PC-3 (cell line): ENCODE measurements at regions of chr7 and their contacts with region 1.

Region 1: GRCh38 chr7:130912862-130913631 is 179.0 kb upstream of the KLF14 start:
- DNase-seq: peak; percentile 96
- ATAC-seq: peak; percentile 52
- H3K4me3 ChIP-seq: peak overlapping the region; percentile 92
- H3K27ac ChIP-seq: peak overlapping the region; percentile 99
- H3K4me1 ChIP-seq: peaks cover 57% of the 10 kb centered on the region
- H3K27me3 ChIP-seq: no peaks in the 10 kb centered on the region
- CTCF ChIP-seq: no peak

Region 2: DNA sequence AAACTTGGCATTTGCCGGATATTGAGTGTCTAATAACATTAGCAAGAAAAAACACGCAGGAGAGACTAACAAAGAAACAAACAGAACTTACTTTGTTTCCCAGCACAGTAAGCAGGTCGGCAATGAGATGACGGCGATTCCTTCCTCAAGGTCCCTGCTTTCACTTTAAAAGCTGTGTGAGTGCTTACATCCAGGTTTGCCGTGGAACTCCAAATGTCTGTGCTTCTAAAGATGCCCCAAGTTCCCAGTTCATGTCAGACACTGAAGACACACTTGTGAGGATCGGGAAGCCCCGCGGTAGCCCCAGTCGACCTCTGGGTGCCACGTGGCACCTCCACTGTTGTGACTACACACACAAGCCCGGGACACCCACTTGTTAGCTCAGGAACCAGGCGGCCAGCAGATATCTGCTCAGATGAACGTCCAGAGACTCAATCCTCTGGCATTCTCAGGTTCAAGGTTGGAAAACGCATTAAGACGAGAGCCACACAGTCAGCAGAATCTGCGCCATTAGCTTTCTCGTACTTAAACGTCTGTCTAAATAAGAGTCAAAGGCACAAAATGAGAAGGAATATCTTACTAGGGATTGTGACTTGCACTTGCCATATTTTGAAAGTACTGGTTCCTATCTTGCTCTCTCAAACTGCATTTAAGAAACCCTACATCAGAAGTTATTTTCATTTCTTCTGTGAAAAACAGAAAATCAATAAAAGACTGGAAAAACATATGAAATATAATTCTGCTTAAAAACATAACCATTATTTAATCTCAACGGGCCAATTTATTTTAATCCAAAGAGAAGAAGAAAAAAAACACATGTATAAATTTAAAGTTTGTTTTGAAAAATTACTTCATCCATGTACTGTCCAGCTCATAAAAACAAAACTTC is 28.5 kb after region 1 on chr7:
- CTCF ChIA-PET with region 1: interaction called, 3 read pairs
- POLR2A ChIA-PET with region 1: interaction called, 10 read pairs
- intact Hi-C with region 1: loop called (anchors 1 kb)
- DNase-seq: peak; percentile 63
- ATAC-seq: peak; percentile 54
- H3K4me3 ChIP-seq: peak overlapping the region; percentile 80
- H3K27ac ChIP-seq: peak overlapping the region; percentile 87
- H3K4me1 ChIP-seq: peaks cover 63% of the 10 kb centered on the region
- H3K27me3 ChIP-seq: no peaks in the 10 kb centered on the region
- CTCF ChIP-seq: no peak

Region 3: GRCh38 chr7:130961128-130961601 is 48.1 kb after region 1 on chr7:
- CTCF ChIA-PET with region 1: no interaction called
- POLR2A ChIA-PET with region 1: no interaction called
- intact Hi-C with region 1: loop called (anchors 2 kb)
- DNase-seq: no peak
- ATAC-seq: peak; percentile 16
- H3K4me3 ChIP-seq: peak overlapping the region; percentile 36; the same call in 1 of the 2 replicates
- H3K27ac ChIP-seq: peak overlapping the region; percentile 89
- H3K4me1 ChIP-seq: peaks cover 19% of the 10 kb centered on the region
- H3K27me3 ChIP-seq: no peaks in the 10 kb centered on the region
- CTCF ChIP-seq: no peak

Region 4: DNA sequence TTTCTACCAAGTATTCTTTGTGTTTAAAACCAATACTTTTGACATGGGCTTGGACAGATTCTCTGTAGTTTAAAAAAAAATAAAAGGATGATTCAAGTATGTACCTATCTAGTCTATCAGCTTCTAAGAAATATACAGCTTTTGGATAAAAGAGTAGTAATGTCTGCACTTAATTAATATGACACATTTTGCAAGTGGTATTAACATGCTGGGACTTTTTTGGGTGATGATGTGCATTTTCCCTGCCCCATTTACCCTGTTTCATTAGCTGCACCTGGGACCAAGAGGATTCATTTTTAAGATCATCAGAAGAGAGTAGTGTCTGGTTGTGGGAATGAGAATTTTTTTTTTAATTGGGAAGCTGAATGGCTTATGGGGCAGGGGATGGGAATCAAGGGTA is 57.1 kb after region 1 on chr7:
- CTCF ChIA-PET with region 1: no interaction called
- POLR2A ChIA-PET with region 1: interaction called, 10 read pairs
- intact Hi-C with region 1: no loop called
- DNase-seq: no peak
- ATAC-seq: no peak
- H3K4me3 ChIP-seq: no peak overlapping the region
- H3K27ac ChIP-seq: no peak overlapping the region
- H3K4me1 ChIP-seq: peaks cover 4% of the 10 kb centered on the region; the same call in 1 of the 2 replicates
- H3K27me3 ChIP-seq: no peaks in the 10 kb centered on the region
- CTCF ChIP-seq: no peak